ENCODE measurements at regions of chr12 and their contacts with region 1.

Region 1: GRCh38 chr12:130818635-130819576 is 20.1 kb downstream of the STX2 start:
- DNase-seq: peak; percentile 28
- H3K4me3 ChIP-seq: peak overlapping the region; percentile 32 to 49 (median 40)
- H3K27ac ChIP-seq: no peak overlapping the region
- H3K4me1 ChIP-seq: peaks cover 6% of the 10 kb centered on the region
- H3K27me3 ChIP-seq: no peaks in the 10 kb centered on the region
- CTCF ChIP-seq: peak; percentile 55 to 70

Region 2: GRCh38 chr12:130761537-130762318 is 57.2 kb before region 1 on chr12:
- CTCF ChIA-PET with region 1: no interaction called
- dilution Hi-C with region 1: no loop called
- in situ Hi-C with region 1: loop called (anchors 5 kb)
- intact Hi-C with region 1: loop called (anchors 1 kb)
- DNase-seq: peak; percentile 37
- H3K4me3 ChIP-seq: no peak overlapping the region
- H3K27ac ChIP-seq: no peak overlapping the region
- H3K4me1 ChIP-seq: no peaks in the 10 kb centered on the region
- H3K27me3 ChIP-seq: no peaks in the 10 kb centered on the region
- CTCF ChIP-seq: peak; percentile 46 to 80

Region 3: DNA sequence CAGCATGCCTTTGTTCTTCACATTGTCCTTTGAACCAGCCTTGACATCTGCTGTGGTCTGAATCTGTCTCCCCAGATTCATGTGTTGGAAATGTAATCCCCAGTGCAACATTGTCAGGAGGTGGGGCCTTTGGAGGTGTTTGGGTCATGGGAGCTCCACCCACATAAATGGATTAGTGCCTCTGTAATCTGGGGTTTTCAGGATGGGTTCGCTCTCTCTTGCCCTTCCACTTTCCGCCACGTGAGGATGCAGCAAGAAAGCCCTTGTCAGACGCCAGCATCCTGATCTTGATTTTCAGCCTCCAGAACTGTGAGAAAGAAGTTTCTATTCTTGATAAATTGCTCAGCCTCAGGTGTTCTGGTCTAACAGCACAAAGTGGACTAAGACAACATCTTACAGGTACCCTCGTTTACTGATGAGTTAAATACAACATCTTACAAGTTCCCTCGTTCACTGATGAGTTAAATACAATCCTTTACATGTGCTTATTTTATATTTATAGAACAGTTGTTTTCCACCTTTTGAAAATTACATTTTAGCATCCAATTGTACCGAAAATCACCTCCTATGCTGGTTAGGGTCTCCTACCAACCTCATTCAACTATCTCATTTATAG is 48.4 kb before region 1 on chr12:
- CTCF ChIA-PET with region 1: no interaction called
- dilution Hi-C with region 1: loop called (anchors 5 kb)
- in situ Hi-C with region 1: loop called in 1 of 2 experiments (anchors 5 kb)
- intact Hi-C with region 1: no loop called
- DNase-seq: no peak
- H3K4me3 ChIP-seq: no peak overlapping the region
- H3K27ac ChIP-seq: no peak overlapping the region
- H3K4me1 ChIP-seq: peaks cover 14% of the 10 kb centered on the region
- H3K27me3 ChIP-seq: no peaks in the 10 kb centered on the region
- CTCF ChIP-seq: no peak

Region 4: DNA sequence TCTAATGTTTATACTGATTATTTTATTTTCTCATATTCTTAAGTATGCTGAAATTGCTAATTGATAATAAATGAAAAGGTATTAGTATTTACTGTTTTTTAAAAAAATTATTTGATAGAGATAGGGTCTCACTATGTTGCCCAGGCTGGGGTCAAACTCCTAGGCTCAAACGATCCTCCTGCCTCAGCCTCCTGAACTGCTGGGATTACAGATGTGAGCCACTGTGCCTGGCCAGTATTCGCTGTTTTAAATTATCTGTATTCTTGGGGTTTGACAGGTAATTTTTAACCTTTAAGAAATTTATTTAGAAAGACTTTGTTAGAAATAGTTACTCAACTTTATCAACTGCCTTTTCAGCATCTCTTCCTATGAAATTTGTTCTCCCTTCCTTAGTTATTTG is 85.2 kb after region 1 on chr12:
- CTCF ChIA-PET with region 1: no interaction called
- dilution Hi-C with region 1: loop called (anchors 5 kb)
- in situ Hi-C with region 1: no loop called
- intact Hi-C with region 1: no loop called
- DNase-seq: no peak
- H3K4me3 ChIP-seq: no peak overlapping the region
- H3K27ac ChIP-seq: no peak overlapping the region
- H3K4me1 ChIP-seq: no peaks in the 10 kb centered on the region
- H3K27me3 ChIP-seq: no peaks in the 10 kb centered on the region
- CTCF ChIP-seq: no peak

Region 5: GRCh38 chr12:131092901-131093603 is 274.1 kb after region 1 on chr12:
- CTCF ChIA-PET with region 1: no interaction called
- dilution Hi-C with region 1: no loop called
- in situ Hi-C with region 1: no loop called
- intact Hi-C with region 1: no loop called
- DNase-seq: peak; percentile 1
- H3K4me3 ChIP-seq: no peak overlapping the region
- H3K27ac ChIP-seq: no peak overlapping the region
- H3K4me1 ChIP-seq: no peaks in the 10 kb centered on the region
- H3K27me3 ChIP-seq: no peaks in the 10 kb centered on the region
- CTCF ChIP-seq: no peak

Measured in mammary epithelial cell (primary cell).